Dendritic cell treated with granulocyte-macrophage colony-stimulating factor and Interleukin-4, amounts not matched to agents 40 ng/mL and 50 ng/mL, for 4 days (primary cell): ENCODE measurements at regions of chr14 and their contacts with region 1.

Region 1: GRCh38 chr14:99884834-99885648 is 91.8 kb downstream of the EML1 start:
- H3K4me3 Mint-ChIP-seq: no peak overlapping the region
- H3K27ac Mint-ChIP-seq: no peak overlapping the region
- H3K4me1 Mint-ChIP-seq: no peaks in the 10 kb centered on the region
- H3K27me3 Mint-ChIP-seq: peaks cover 12% of the 10 kb centered on the region

Region 2: GRCh38 chr14:99518441-99519346 is 366.3 kb before region 1 on chr14:
- intact Hi-C with region 1: loop called (anchors 5 kb)
- H3K4me3 Mint-ChIP-seq: no peak overlapping the region
- H3K27ac Mint-ChIP-seq: no peak overlapping the region
- H3K4me1 Mint-ChIP-seq: no peaks in the 10 kb centered on the region
- H3K27me3 Mint-ChIP-seq: peaks cover 1% of the 10 kb centered on the region

Region 3: GRCh38 chr14:99683619-99684355 is 201.3 kb before region 1 on chr14 and contains the start of gene CYP46A1:
- intact Hi-C with region 1: loop called (anchors 1 kb)
- H3K4me3 Mint-ChIP-seq: peak within 1 kb of the TSS; percentile 89
- H3K27ac Mint-ChIP-seq: peak within 1 kb of the TSS; percentile 83
- H3K4me1 Mint-ChIP-seq: peaks cover 18% of the 10 kb centered on the region
- H3K27me3 Mint-ChIP-seq: peaks cover 63% of the 10 kb centered on the region

Region 4: DNA sequence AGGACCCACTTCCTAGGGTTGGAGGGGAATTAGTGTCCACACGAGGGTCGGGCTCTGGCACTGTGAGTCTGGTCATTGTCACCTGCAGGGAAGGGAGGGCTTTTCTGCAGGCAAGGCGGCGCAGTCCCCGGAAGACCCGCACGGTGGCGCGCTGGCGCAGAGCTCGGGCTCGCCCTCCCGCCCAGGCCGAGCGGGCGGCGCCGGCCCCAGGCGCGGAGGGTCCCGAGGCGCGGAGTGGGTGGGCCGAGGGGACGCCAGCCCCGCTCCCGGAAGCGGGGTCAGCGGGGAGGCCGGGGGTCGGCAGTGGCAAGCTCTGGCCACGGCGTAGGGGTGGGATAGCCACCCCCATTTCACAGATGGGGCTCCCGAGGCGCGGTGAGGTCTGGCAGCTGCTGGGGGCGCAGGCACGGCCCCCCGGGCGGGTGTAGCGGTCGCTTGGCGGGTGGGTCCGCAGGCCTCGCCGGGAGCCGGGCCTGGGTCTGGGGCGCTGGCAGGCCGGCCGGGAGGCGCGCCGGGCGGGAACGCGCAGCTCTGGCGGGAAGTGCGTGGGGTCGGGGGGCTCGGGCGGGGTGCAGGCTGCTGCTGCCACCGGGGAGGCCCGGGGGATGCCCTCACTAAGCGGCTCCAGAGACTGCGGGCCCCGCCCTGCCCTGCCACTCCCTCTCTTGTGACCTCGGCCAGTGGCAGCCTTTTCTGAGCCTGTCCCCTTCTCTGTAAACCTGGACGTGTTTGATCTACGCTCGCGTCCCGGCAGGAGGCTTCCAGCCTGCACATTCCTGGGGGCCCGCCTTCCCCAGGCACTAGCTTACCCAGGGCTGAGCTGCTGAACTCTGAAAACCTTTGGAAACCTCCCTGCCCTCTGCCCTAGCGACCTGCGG is 154.8 kb before region 1 on chr14:
- intact Hi-C with region 1: loop called (anchors 2 kb)
- H3K4me3 Mint-ChIP-seq: no peak overlapping the region
- H3K27ac Mint-ChIP-seq: no peak overlapping the region
- H3K4me1 Mint-ChIP-seq: peaks cover 5% of the 10 kb centered on the region
- H3K27me3 Mint-ChIP-seq: peaks cover 45% of the 10 kb centered on the region

Region 5: GRCh38 chr14:99853206-99853605 is 31.8 kb before region 1 on chr14:
- intact Hi-C with region 1: no loop called
- H3K4me3 Mint-ChIP-seq: no peak overlapping the region
- H3K27ac Mint-ChIP-seq: no peak overlapping the region
- H3K4me1 Mint-ChIP-seq: no peaks in the 10 kb centered on the region
- H3K27me3 Mint-ChIP-seq: peaks cover 17% of the 10 kb centered on the region

Region 6: GRCh38 chr14:100554082-100554677 is 669.1 kb after region 1 on chr14:
- intact Hi-C with region 1: no loop called
- H3K4me3 Mint-ChIP-seq: no peak overlapping the region
- H3K27ac Mint-ChIP-seq: peak overlapping the region; percentile 66
- H3K4me1 Mint-ChIP-seq: peaks cover 62% of the 10 kb centered on the region
- H3K27me3 Mint-ChIP-seq: peaks cover 60% of the 10 kb centered on the region